Dorsolateral prefrontal cortex (tissue), 120 donors: ENCODE measurements at regions of chr17 and their contacts with region 1.

Region 1: GRCh38 chr17:7219812-7220581 is at the starts of genes ACADVL and DLG4:
- DNase-seq: peak; percentile 87 to 96 (median 92)
- H3K4me3 ChIP-seq: peak within 1 kb of the TSS; percentile 80 to 100 (median 96)
- H3K27ac ChIP-seq: peak within 1 kb of the TSS; percentile 71 to 99 (median 95)
- H3K27me3 ChIP-seq: no peaks in the 10 kb centered on the region
- CTCF ChIP-seq: peak in 13 of 56 donors; percentile 1 to 33 (median 16)
- total RNA-seq, gene ACADVL: 242 to 722 (median 375) TPM
- total RNA-seq, gene DLG4: 109 to 508 (median 348) TPM

Region 2: GRCh38 chr17:7234083-7234951 is 14.3 kb after region 1 on chr17 and contains the start of gene DVL2:
- intact Hi-C with region 1: loop called (anchors 2 kb)
- DNase-seq: peak; percentile 95 to 97 (median 96)
- H3K4me3 ChIP-seq: peak within 1 kb of the TSS; percentile 65 to 99 (median 91)
- H3K27ac ChIP-seq: peak within 1 kb of the TSS; percentile 56 to 99 (median 93)
- H3K27me3 ChIP-seq: no peaks in the 10 kb centered on the region
- CTCF ChIP-seq: peak in 19 of 56 donors; percentile 2 to 38 (median 19)
- total RNA-seq, gene DVL2: 31.9 to 83.9 (median 51.7) TPM